ENCODE measurements at regions of chr2 and their contacts with region 1.

Region 1: DNA sequence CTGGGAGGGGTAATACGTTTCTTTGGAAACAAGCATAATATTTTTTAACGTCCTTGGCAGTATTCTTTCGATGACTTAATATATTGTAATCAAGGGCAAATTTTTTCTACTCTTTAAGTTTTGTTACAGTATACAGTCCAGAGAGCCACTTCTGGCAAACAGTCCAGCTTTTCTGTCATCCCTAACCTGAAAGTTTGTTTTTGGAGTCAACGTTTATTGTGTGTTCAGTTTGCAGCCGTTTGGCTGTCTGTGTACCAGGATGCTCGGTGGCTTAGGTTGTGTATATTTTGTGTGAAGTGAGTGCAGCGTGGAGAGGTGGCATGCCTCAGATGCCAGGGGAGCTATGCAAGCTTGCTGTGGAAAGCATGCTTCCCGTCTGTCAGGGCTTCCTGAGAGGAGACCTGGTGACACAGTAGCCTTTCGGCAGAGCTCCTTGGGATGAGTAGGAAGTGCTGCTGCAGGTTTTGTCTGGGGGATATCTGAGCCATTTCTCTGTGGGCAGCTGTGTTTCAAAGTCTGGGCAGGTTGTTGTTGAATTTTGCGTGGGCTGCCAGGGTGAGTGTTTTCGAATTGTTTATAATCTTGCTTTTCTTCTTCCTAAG is 14.7 kb downstream of the MAP3K20 start:
- DNase-seq: peak; percentile 17 to 32
- ATAC-seq: peak; percentile 57 to 85 (median 76)
- H3K4me3 ChIP-seq: peak overlapping the region in 7 of 10 donors; percentile 9 to 33 (median 22)
- H3K27ac ChIP-seq: peak overlapping the region; percentile 66 to 83 (median 79)
- H3K4me1 ChIP-seq: peaks cover 3 to 86% (median 54%) of the 10 kb centered on the region in 9 donors
- H3K27me3 ChIP-seq: no peaks in the 10 kb centered on the region
- CTCF ChIP-seq: no peak

Region 2: DNA sequence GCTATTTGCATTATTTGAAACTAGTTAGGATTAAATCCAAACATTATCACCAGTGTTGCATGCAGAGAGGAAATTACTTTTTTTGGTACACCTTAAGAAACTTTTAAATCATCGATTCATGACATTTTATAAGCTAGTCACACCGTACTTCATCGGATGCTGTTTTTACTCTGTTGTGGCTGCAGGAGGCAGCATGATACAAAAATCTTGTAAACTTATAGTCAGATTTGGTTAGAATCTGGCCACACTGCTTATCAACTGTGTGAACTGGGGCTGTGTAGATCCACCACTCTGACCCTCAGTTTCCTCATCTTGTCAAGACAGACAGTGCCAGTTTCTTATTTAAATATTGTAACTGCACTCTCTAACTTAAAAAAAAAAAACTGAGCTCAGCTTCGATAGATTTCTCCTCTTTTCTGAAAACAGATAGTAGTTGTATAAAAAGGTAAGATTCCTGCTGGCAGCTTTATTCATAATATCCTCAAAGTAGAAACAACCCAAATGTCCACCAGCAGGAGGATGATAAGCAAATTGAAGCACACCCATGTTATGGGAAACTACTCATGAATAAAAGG is 277.0 kb before region 1 on chr2:
- intact Hi-C with region 1: no loop called
- DNase-seq: peak in 1 of 2 donors; percentile 23
- ATAC-seq: peak in 7 of 8 donors; percentile 55 to 88 (median 67)
- H3K4me3 ChIP-seq: no peak overlapping the region
- H3K27ac ChIP-seq: no peak overlapping the region
- H3K4me1 ChIP-seq: peaks cover 0 to 5% (median 0%) of the 10 kb centered on the region in 9 donors
- H3K27me3 ChIP-seq: peaks cover 0 to 12% (median 0%) of the 10 kb centered on the region in 7 donors
- CTCF ChIP-seq: peak; percentile 29 to 79 (median 56)

Region 3: GRCh38 chr2:173187911-173188788 is 97.8 kb after region 1 on chr2:
- intact Hi-C with region 1: loop called in 2 of 10 experiments (anchors 2 to 5 kb)
- DNase-seq: peak in 1 of 2 donors; percentile 59
- ATAC-seq: peak in 6 of 8 donors; percentile 44 to 75 (median 64)
- H3K4me3 ChIP-seq: no peak overlapping the region
- H3K27ac ChIP-seq: peak overlapping the region in 9 of 10 donors; percentile 18 to 87 (median 68)
- H3K4me1 ChIP-seq: peaks cover 0 to 96% (median 62%) of the 10 kb centered on the region in 9 donors
- H3K27me3 ChIP-seq: no peaks in the 10 kb centered on the region
- CTCF ChIP-seq: no peak

Region 4: GRCh38 chr2:173205375-173205774 is 115.0 kb after region 1 on chr2:
- intact Hi-C with region 1: loop called in 3 of 10 experiments (anchors 5 to 10 kb)
- DNase-seq: peak; percentile 46 to 84
- ATAC-seq: peak; percentile 87 to 98 (median 94)
- H3K4me3 ChIP-seq: no peak overlapping the region
- H3K27ac ChIP-seq: peak overlapping the region; percentile 45 to 83 (median 71)
- H3K4me1 ChIP-seq: peaks cover 9 to 72% (median 53%) of the 10 kb centered on the region in 9 donors
- H3K27me3 ChIP-seq: no peaks in the 10 kb centered on the region
- CTCF ChIP-seq: no peak

Region 5: DNA sequence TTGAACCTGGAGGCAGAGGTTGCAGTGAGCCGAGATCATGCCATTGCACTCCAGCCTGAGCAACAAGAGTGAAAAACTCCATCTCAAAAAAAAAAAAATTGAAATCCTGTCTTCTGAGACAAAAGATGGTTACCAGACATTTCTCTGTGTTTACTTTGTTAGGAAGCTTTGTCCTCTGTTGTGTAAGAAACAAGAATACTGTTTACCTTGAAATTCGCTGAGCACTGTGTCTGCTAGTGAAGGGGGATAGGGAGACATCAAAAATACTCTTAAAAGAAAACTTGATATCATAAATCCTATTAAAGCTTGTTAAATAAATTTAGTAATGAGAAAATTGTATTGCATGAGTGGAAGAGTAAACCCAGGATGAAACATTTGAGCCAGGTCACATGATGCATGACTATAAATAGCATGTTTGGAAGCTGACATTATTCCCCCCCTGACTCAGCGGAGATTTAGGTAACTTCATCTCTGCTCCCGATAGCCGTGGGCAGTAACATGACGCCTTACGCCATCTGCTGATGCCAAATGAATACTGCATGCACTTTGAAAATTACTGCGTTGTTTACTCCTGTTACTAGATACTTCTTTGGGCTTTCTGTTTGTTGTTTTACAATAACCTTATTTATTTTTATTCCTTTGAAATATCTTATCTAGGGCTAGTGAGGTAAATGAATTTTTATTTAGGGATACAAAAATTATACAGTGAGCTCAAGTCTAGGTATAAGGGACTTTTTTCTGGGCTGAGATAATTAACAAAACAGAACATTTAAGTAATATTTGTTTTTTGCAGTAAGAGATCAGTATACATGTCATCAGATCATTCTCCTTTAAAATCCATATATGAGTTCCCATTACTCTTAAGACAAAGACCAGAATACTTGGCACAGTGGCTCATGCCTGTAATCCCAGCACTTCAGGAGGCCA is 120.2 kb after region 1 on chr2:
- intact Hi-C with region 1: loop called in 3 of 10 experiments (anchors 5 to 10 kb)
- DNase-seq: peak; percentile 20 to 87
- ATAC-seq: peak; percentile 87 to 94 (median 92)
- H3K4me3 ChIP-seq: no peak overlapping the region
- H3K27ac ChIP-seq: peak overlapping the region; percentile 8 to 83 (median 59)
- H3K4me1 ChIP-seq: peaks cover 9 to 60% (median 35%) of the 10 kb centered on the region in 9 donors
- H3K27me3 ChIP-seq: no peaks in the 10 kb centered on the region
- CTCF ChIP-seq: peak; percentile 69 to 97 (median 89)